ENCODE measurements at regions of chr11 and their contacts with region 1.

Region 1: DNA sequence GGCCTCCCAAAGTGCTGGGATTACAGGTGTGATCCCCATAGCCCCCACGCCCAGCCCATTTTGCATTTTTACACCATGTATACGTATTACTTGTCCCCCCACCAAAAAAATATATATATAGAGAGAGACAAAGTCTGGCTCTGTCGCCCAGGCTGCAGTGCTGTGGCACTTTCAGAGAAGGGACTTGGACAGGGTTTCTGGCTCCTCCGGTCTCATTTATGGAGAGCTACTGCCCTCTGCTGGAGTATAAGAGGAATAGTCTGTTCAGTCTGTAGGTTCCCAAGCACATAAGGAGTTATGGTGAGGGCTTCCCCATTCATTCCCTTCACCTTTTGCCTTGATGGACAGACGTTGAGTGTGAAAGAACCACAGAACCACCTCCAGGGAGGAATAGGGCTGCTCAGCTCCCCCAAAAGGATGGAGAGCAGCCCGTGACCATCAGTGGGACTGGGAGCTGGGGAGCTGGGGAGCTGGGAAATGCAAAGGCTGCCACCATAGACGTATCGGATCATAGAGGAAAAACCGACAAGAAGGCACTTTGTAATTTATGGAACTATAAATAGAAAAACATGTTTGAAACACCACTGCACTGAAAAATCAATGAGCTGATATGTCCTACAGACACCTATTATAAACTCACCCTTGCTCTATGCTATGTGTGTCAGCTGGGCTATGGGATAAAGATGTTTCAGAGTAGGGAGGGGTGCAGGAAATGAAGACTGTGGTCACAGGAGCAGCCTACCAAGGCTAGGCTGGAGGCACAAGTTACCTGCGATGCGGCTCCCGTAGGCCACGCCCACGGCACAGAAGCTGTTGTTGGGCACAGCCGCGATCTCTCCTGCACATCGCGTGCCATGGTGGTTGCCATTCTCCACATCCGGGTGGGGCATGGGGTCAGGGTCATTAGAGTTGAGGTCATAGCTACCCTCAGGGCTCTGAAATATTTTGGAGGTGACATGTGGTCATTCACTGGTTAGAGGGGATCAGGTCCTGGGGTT is 5.2 kb downstream of the PCSK7 start:
- DNase-seq: no peak

Region 2: GRCh38 chr11:116792869-116793771 is 433.6 kb before region 1 on chr11:
- intact Hi-C with region 1: loop called (anchors 2 kb)
- DNase-seq: no peak

Region 3: DNA sequence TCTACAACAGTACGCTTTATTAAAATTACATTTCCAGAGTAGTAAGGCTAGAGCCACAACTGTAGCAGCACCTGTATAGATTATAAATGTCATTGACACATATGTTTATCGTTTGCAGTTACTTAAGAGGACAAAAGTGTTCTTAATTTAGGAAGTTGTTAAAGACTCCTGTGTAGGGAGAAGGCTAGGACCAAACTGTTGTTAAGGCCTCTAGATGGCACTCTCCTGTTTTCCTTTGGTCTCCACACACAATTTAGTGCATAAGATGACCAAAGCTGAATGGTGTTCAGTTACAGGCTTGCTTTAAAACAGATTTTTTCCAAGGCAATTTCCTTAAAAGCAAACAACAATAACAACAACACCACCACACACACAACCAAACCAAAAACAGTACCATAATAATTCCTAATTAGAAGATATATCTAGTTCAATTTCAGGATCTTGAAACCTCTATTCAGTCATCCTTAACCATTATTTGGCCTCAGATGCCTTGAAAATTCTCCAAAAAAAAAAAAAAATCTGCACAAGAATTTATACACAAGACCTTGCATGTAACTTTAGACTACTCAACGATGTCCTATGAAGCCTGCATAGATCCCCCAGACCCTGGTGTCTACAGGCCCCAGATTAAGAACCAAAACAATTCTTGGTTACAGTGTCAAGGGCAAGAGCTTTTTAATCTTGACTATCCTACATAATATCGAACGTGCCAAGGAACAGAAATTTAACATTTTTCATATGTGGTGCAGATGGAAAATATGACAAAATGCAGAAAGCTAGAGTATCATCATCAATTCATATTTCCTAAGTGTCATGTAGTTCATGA is 346.7 kb before region 1 on chr11:
- intact Hi-C with region 1: loop called (anchors 5 kb)
- DNase-seq: no peak

Region 4: DNA sequence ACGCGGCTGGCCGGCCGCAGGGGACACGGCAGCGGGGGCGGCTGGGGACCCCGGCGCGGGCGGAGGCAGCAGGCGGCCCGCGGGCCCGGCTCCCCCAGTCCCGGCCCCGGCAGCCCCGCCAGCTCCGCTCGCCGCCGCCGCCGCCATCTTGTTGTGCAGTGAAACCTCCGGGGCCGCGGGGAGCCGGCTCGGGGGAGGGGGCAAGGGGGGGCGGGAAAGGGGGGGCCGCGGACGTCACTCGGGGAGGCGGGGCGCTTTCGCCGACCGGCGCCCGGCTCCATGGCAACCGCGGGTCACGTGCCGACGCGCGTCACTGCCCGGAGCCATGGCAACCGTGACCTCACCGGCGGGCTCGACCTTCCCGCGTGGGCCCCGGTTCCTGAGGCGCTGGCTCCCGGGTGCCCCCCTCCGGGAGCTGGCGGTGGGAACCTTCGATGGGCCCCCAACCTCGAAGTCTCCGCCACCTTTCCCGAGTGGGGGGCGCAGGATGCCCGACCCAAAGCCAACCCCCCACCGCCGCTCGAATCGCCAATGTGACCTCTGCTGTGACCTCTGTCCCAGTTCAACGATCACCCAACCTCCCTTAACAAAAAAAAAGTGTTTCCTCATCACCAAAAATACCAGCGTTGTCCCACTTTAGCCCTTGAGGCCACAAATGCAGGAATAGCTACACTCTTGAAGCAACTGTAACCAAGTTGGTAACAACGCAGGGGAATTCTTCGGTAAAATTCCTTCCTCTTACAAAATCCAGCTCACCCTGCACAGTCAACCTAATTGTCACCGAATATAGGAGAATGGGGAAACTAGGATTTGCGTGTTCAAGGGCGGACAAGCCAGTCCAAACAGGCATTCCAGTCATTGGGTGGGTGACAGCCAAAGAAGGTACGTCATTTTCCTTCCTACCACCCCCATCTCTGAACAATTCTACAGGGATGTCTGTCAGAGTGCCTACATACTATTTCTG is 128.1 kb before region 1 on chr11 and contains the start of gene SIK3:
- intact Hi-C with region 1: loop called (anchors 2 kb)
- DNase-seq: peak; percentile 97
- total RNA-seq, gene SIK3: 47.4 TPM

Region 5: DNA sequence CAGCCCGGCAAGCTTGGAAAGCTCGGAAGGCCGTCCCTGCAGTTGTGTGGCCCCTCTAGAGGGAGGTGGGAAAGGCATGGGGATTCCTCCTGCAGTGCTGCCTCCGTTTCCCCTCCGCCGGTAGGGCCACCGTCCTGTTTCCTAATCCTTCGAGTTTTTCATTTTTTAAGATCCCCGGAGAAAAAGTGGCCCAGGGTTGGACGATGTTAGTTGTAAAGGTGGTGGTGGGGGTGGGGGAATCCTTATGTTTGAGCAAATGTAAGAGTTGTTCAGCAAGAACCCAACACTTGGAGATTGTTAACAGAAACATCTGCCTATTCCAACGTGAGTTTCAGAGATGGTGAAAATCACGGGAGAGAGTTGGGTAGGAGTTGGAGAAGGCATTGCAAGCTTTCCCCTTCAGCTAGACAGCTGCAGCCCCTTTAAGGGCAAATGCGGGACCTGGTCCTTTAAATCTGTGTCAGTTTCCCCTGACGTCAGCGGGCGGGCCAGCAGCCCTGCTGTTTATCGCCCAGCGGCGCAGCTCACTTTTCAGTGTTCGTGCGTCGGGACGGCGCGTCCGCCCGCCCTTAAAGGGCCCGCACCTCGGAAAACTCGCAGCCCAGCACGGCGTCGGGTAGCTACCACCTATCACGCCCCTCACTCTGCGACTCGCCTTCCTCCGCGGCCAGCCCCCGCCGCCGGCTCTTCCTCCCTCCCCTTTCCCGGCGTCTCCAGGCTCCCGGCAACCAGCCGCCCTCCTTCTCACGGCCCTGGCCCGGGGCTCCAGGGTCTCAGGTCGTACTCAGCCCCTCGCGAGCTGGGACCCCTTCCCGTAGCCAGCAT is 48.3 kb before region 1 on chr11 and contains the start of gene SIDT2:
- intact Hi-C with region 1: loop called (anchors 2 kb)
- DNase-seq: peak; percentile 98
- total RNA-seq, gene SIDT2: 25.3 TPM